ENCODE measurements at regions of chr21 and their contacts with region 1.

Region 1: GRCh38 chr21:42652527-42653230 is 742 bp upstream of the PDE9A start:
- DNase-seq: peak; percentile 93 to 94
- H3K4me3 ChIP-seq: peak overlapping the region in 2 of 3 donors; percentile 27 to 31
- H3K27ac ChIP-seq: peak overlapping the region; percentile 63 to 82 (median 68)
- H3K4me1 ChIP-seq: peaks cover 20 to 31% of the 10 kb centered on the region in 2 donors
- H3K27me3 ChIP-seq: no peaks in the 10 kb centered on the region
- CTCF ChIP-seq: peak; percentile 33 to 78 (median 70)
- POLR2A ChIP-seq: peak in 1 of 2 donors; percentile 51

Region 2: DNA sequence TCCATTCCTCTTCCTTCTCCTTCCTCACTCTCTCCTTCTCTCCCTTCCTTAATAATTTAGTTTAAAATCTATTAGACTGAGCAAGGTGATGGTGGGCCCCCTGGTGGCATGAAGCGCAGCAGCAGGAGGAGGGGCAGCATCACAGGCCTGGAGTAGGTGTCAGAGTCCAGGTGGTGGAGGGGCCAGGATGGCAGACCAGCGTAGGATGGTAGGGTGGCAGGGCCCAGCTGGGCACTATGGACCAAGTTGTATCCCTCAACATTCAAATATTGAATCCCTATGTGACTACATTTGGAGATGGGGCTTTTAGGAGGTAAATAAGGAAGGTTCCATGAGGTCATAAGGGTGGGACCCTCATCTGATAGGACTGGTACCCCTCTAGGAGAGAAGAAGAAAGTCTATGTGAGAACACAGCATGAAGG is 165.7 kb after region 1 on chr21:
- intact Hi-C with region 1: loop called (anchors 5 kb)
- DNase-seq: peak; percentile 69 to 76
- H3K4me3 ChIP-seq: no peak overlapping the region
- H3K27ac ChIP-seq: no peak overlapping the region
- H3K4me1 ChIP-seq: no peaks in the 10 kb centered on the region
- H3K27me3 ChIP-seq: no peaks in the 10 kb centered on the region
- CTCF ChIP-seq: peak; percentile 57 to 92 (median 82)
- POLR2A ChIP-seq: no peak

Measured in thyroid gland (tissue), 4 donors.